Vagina (tissue), 2 donors: ENCODE measurements at regions of chr4 and their contacts with region 1.

Region 1: DNA sequence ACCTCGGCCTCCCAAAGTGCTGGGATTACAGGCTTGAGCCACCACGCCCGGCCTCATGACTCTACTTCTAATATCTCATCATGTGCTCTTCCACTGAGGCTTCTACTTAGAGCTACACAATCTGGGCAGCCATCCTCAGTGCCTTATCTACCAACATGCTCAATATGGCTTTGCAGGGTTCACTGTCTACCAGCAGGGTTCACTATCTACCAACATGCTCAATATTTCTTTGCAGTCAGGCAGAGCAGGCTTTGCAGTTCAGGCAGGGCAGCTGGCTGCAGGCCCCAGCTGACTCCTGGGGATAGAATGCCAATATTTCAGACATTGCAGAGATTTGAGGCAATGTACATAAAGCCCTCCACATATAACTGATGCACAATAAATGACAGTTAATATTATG is 47.5 kb downstream of the PKD2 start:
- DNase-seq: no peak
- H3K4me3 ChIP-seq: no peak overlapping the region
- H3K27ac ChIP-seq: no peak overlapping the region
- H3K4me1 ChIP-seq: no peaks in the 10 kb centered on the region
- H3K27me3 ChIP-seq: no peaks in the 10 kb centered on the region
- CTCF ChIP-seq: no peak
- POLR2A ChIP-seq: no peak

Region 2: GRCh38 chr4:87949961-87950360 is 104.9 kb before region 1 on chr4:
- intact Hi-C with region 1: no loop called
- DNase-seq: no peak
- H3K4me3 ChIP-seq: no peak overlapping the region
- H3K27ac ChIP-seq: no peak overlapping the region
- H3K4me1 ChIP-seq: no peaks in the 10 kb centered on the region
- H3K27me3 ChIP-seq: no peaks in the 10 kb centered on the region
- CTCF ChIP-seq: no peak
- POLR2A ChIP-seq: no peak

Region 3: GRCh38 chr4:88196013-88196365 is 141.1 kb after region 1 on chr4:
- intact Hi-C with region 1: loop called (anchors 10 kb)
- DNase-seq: no peak
- H3K4me3 ChIP-seq: no peak overlapping the region
- H3K27ac ChIP-seq: no peak overlapping the region
- H3K4me1 ChIP-seq: no peaks in the 10 kb centered on the region
- H3K27me3 ChIP-seq: no peaks in the 10 kb centered on the region
- CTCF ChIP-seq: no peak
- POLR2A ChIP-seq: no peak

Region 4: GRCh38 chr4:88442703-88443191 is 387.8 kb after region 1 on chr4:
- intact Hi-C with region 1: no loop called
- DNase-seq: no peak
- H3K4me3 ChIP-seq: no peak overlapping the region
- H3K27ac ChIP-seq: no peak overlapping the region
- H3K4me1 ChIP-seq: no peaks in the 10 kb centered on the region
- H3K27me3 ChIP-seq: no peaks in the 10 kb centered on the region
- CTCF ChIP-seq: no peak
- POLR2A ChIP-seq: no peak